OCI-LY7 (cell line): ENCODE measurements at regions of chr14 and their contacts with region 1.

Region 1: DNA sequence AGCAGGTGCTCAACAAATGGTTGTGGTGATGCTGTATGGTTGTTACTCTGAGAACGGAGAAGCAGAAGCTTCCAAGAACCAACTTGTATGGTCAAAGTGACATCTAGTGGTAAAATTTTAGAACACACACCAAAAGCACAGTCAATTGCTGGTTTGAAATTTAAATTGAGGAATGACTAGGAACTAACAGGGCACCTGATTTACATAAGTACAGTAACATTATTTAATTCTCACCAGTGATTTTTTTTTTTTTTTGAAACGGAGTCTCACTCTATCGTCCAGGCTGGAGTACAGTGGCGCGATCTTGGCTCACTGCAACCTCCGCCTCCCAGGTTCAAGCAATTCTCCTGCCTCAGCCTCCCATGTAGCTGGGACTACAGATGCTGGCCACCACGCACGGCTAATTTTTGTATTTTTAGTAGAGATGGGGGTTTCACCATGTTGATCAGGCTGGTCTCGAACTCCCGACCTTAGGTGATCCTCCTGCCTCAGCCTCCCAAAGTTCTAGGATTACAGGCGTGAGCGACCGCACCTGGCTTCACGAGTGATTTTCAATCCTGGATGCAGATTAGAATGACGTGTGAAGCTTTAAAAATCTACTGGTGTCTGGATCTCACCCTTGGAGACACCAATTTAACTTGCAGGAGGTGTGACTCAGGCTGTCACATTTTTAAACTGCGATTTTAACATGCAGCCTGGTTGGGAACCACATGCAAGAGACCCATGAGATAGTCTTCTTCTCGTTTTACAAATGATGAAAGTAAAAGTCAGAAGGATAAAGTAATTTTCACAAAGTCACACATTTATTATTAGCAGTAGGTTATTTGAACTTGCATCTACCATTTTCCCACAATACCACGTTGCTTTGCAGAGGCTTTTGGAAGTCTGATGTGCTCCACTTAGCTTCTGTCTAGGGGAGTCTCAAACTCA is 14.1 kb upstream of the NUMB start:
- DNase-seq: peak; percentile 79
- H3K4me3 ChIP-seq: no peak overlapping the region
- H3K27ac ChIP-seq: no peak overlapping the region
- H3K4me1 ChIP-seq: no peaks in the 10 kb centered on the region
- CTCF ChIP-seq: peak; percentile 87

Region 2: GRCh38 chr14:73231981-73232851 is 240.2 kb before region 1 on chr14:
- CTCF ChIA-PET with region 1: no interaction called
- POLR2A ChIA-PET with region 1: interaction called, 3 read pairs
- intact Hi-C with region 1: loop called (anchors 1 kb)
- DNase-seq: peak; percentile 57
- H3K4me3 ChIP-seq: no peak overlapping the region
- H3K27ac ChIP-seq: no peak overlapping the region
- H3K4me1 ChIP-seq: peaks cover 13% of the 10 kb centered on the region
- CTCF ChIP-seq: peak; percentile 63

Region 3: GRCh38 chr14:73295198-73295796 is 177.2 kb before region 1 on chr14:
- CTCF ChIA-PET with region 1: interaction called, 11 read pairs
- POLR2A ChIA-PET with region 1: interaction called, 3 read pairs
- intact Hi-C with region 1: loop called (anchors 1 kb)
- DNase-seq: peak; percentile 76
- H3K4me3 ChIP-seq: no peak overlapping the region
- H3K27ac ChIP-seq: no peak overlapping the region
- H3K4me1 ChIP-seq: no peaks in the 10 kb centered on the region
- CTCF ChIP-seq: peak; percentile 95

Region 4: DNA sequence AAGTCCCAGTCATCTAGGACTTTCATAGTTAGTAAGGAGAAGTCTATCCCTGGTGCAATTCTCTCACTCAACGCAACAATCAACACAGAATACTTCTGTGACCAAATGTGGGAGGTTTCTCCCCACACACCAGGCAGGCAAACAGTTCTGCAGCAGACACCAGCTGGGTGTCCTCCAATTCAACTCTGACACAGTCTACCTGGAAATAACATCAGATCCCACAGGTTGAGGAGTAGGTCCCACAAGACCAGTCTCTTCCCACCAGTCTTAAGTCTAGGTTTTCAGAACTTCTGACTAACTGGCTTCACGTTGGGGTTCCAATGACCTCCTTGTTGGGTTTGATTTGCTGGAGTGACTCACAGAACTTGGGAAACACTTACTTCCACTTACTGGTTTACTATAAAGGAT is 154.7 kb after region 1 on chr14:
- CTCF ChIA-PET with region 1: no interaction called
- POLR2A ChIA-PET with region 1: no interaction called
- intact Hi-C with region 1: no loop called
- DNase-seq: no peak
- H3K4me3 ChIP-seq: no peak overlapping the region
- H3K27ac ChIP-seq: no peak overlapping the region
- H3K4me1 ChIP-seq: no peaks in the 10 kb centered on the region
- CTCF ChIP-seq: no peak